ENCODE measurements at regions of chr5 and their contacts with region 1.

Region 1: GRCh38 chr5:174418928-174419796 is 305.2 kb upstream of the MSX2 start:
- DNase-seq: peak; percentile 87
- ATAC-seq: peak; percentile 98
- H3K4me3 ChIP-seq: peak overlapping the region; percentile 65
- H3K27ac ChIP-seq: no peak overlapping the region
- H3K4me1 ChIP-seq: peaks cover 4% of the 10 kb centered on the region; the same call in 1 of the 2 replicates
- H3K27me3 ChIP-seq: no peaks in the 10 kb centered on the region
- CTCF ChIP-seq: peak; percentile 91

Region 2: DNA sequence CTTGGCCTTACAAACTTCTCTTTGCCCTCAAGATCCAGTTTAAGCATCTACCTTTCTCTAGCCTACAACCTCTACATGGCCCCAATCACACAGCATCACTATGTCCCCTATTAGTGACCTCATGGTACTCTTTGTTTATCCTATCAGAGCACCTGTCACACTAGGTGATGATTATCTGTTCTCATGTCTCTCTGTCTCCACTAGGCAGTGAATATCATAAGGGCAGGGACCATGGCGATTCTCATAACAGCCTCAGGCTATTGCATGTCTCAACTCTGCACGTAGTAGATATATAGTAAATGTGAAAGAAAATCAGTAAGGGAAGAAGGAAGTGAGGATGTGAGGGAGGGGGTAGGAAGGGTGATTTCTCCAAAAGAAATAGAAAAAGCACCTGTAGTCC is 62.6 kb before region 1 on chr5:
- CTCF ChIA-PET with region 1: no interaction called
- POLR2A ChIA-PET with region 1: no interaction called
- intact Hi-C with region 1: no loop called
- DNase-seq: no peak
- ATAC-seq: no peak
- H3K4me3 ChIP-seq: no peak overlapping the region
- H3K27ac ChIP-seq: peak overlapping the region; percentile 89
- H3K4me1 ChIP-seq: peaks cover 21% of the 10 kb centered on the region
- H3K27me3 ChIP-seq: no peaks in the 10 kb centered on the region
- CTCF ChIP-seq: no peak

Region 3: GRCh38 chr5:174735498-174736330 is 316.6 kb after region 1 on chr5:
- CTCF ChIA-PET with region 1: interaction called, 4 read pairs
- POLR2A ChIA-PET with region 1: no interaction called
- intact Hi-C with region 1: loop called (anchors 2 kb)
- DNase-seq: peak; percentile 62
- ATAC-seq: peak; percentile 57; the same call in 1 of the 2 replicates
- H3K4me3 ChIP-seq: peak overlapping the region; percentile 70
- H3K27ac ChIP-seq: no peak overlapping the region
- H3K4me1 ChIP-seq: no peaks in the 10 kb centered on the region
- H3K27me3 ChIP-seq: peaks cover 7% of the 10 kb centered on the region; the same call in 1 of the 2 replicates
- CTCF ChIP-seq: peak; percentile 71

Region 4: GRCh38 chr5:174935854-174936474 is 516.8 kb after region 1 on chr5:
- CTCF ChIA-PET with region 1: no interaction called
- POLR2A ChIA-PET with region 1: no interaction called
- intact Hi-C with region 1: loop called (anchors 5 kb)
- DNase-seq: peak; percentile 61
- ATAC-seq: peak; percentile 80
- H3K4me3 ChIP-seq: no peak overlapping the region
- H3K27ac ChIP-seq: no peak overlapping the region
- H3K4me1 ChIP-seq: no peaks in the 10 kb centered on the region
- H3K27me3 ChIP-seq: peaks cover 8% of the 10 kb centered on the region
- CTCF ChIP-seq: peak; percentile 82

Measured in PC-3 (cell line).